Activated T-helper 2 cell treated with anti-CD3 and anti-CD28 coated beads, Interferon-gamma antibody, Interleukin-2, Interleukin-4, amounts not matched to agents 10 μg/mL and 5 μg/mL and 100 μg/mL, durations not matched to agents 14 hours and 24 hours and 36 hours (primary cell): ENCODE measurements at regions of chr6 and their contacts with region 1.

Region 1: GRCh38 chr6:11324453-11325015 is 92.1 kb upstream of the NEDD9 start:
- DNase-seq: peak; percentile 31
- H3K4me3 Mint-ChIP-seq: peak overlapping the region; percentile 40
- H3K27ac Mint-ChIP-seq: peak overlapping the region; percentile 89
- H3K4me1 Mint-ChIP-seq: peaks cover 69% of the 10 kb centered on the region
- H3K27me3 Mint-ChIP-seq: no peaks in the 10 kb centered on the region

Region 2: GRCh38 chr6:11093589-11094410 is 230.7 kb before region 1 on chr6 and contains the start of gene SMIM13:
- intact Hi-C with region 1: loop called (anchors 5 kb)
- DNase-seq: peak; percentile 92
- H3K4me3 Mint-ChIP-seq: peak within 1 kb of the TSS; percentile 96
- H3K27ac Mint-ChIP-seq: peak within 1 kb of the TSS; percentile 98
- H3K4me1 Mint-ChIP-seq: peaks cover 22% of the 10 kb centered on the region
- H3K27me3 Mint-ChIP-seq: peaks cover 2% of the 10 kb centered on the region
- total RNA-seq, gene SMIM13: 12.2 and 12.3 TPM in 2 replicates

Region 3: DNA sequence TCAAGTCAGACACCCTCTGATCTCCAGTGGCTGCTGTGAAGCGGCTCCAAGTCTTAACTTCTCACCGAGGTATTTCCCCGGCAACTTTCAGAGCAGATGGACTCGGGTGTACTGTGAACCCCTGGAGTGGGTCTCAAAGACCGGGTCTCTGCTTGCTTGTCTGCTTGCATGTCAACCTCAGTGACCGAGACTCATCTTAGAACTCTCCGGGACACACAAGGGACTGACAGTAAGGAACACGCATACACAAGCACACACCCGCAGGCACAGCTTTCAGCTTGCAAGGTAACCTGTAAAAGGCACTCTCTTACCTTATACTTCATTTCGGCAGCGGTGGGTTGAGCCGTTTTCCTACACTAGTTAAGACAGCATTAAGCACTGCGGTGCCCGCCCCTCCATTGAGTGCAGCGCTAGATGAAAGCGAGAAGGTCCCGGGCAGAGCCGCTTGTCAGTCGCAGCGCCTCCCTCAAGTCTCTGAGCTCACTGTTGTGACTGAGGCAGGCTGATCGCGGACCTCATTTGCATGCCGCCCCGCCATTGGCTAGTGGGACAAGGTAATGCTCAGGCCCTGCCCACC is 92.3 kb before region 1 on chr6 and contains the start of gene NEDD9:
- intact Hi-C with region 1: loop called (anchors 1 kb)
- DNase-seq: peak; percentile 94
- H3K4me3 Mint-ChIP-seq: peak within 1 kb of the TSS; percentile 93
- H3K27ac Mint-ChIP-seq: peak within 1 kb of the TSS; percentile 99
- H3K4me1 Mint-ChIP-seq: peaks cover 64% of the 10 kb centered on the region
- H3K27me3 Mint-ChIP-seq: no peaks in the 10 kb centered on the region
- total RNA-seq, gene NEDD9: 34.5 and 35.0 TPM in 2 replicates

Region 4: GRCh38 chr6:11251541-11252360 is 72.8 kb before region 1 on chr6:
- intact Hi-C with region 1: no loop called
- DNase-seq: no peak
- H3K4me3 Mint-ChIP-seq: no peak overlapping the region
- H3K27ac Mint-ChIP-seq: no peak overlapping the region
- H3K4me1 Mint-ChIP-seq: peaks cover 7% of the 10 kb centered on the region
- H3K27me3 Mint-ChIP-seq: no peaks in the 10 kb centered on the region

Region 5: GRCh38 chr6:11298651-11299420 is 25.7 kb before region 1 on chr6:
- intact Hi-C with region 1: no loop called
- DNase-seq: no peak
- H3K4me3 Mint-ChIP-seq: no peak overlapping the region
- H3K27ac Mint-ChIP-seq: no peak overlapping the region
- H3K4me1 Mint-ChIP-seq: peaks cover 28% of the 10 kb centered on the region
- H3K27me3 Mint-ChIP-seq: no peaks in the 10 kb centered on the region

Region 6: GRCh38 chr6:11343963-11344747 is 19.6 kb after region 1 on chr6:
- intact Hi-C with region 1: loop called (anchors 1 kb)
- DNase-seq: no peak
- H3K4me3 Mint-ChIP-seq: no peak overlapping the region
- H3K27ac Mint-ChIP-seq: peak overlapping the region; percentile 61
- H3K4me1 Mint-ChIP-seq: peaks cover 68% of the 10 kb centered on the region
- H3K27me3 Mint-ChIP-seq: no peaks in the 10 kb centered on the region

Region 7: GRCh38 chr6:11366183-11366933 is 41.8 kb after region 1 on chr6:
- intact Hi-C with region 1: loop called (anchors 1 kb)
- DNase-seq: peak; percentile 37
- H3K4me3 Mint-ChIP-seq: peak overlapping the region; percentile 34
- H3K27ac Mint-ChIP-seq: peak overlapping the region; percentile 67
- H3K4me1 Mint-ChIP-seq: peaks cover 88% of the 10 kb centered on the region
- H3K27me3 Mint-ChIP-seq: no peaks in the 10 kb centered on the region

Region 8: DNA sequence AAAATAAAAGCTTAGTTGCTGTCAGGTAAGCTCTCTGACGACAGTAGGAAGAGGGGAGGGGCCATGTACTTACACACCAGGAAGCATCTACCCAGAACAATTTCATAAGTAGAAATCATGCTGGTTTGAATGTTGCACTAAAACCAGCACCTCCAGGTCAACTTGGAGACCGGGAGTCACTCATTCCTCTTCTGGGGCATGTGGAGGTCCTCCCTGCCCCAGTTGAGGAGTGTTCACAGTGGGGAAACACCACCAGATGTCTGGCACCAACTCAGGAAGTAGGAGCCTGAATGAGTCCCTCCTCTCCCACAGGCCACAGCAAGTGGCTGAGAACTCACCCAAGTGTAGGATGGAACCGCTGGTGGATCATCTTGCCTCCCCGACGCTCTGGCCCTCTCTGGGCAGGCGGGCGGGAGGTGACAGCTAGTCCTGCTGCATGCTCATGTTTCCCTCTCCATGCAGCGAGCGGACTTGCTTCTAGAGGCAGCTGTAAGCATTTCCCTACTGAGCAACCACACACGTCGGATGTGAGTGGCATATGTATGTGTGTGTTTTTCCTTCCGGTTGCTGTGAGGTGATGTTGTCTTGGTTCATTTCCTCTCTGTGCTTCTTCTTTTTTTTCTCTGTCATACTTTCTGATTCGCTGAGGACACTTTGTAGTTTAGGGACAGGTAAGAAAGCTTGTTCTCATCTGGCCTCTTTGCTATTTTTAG is 57.4 kb after region 1 on chr6:
- intact Hi-C with region 1: loop called (anchors 1 kb)
- DNase-seq: peak; percentile 71
- H3K4me3 Mint-ChIP-seq: peak overlapping the region; percentile 85
- H3K27ac Mint-ChIP-seq: peak overlapping the region; percentile 92
- H3K4me1 Mint-ChIP-seq: peaks cover 59% of the 10 kb centered on the region
- H3K27me3 Mint-ChIP-seq: no peaks in the 10 kb centered on the region

Region 9: GRCh38 chr6:11392778-11393507 is 68.4 kb after region 1 on chr6:
- intact Hi-C with region 1: no loop called
- DNase-seq: no peak
- H3K4me3 Mint-ChIP-seq: no peak overlapping the region
- H3K27ac Mint-ChIP-seq: no peak overlapping the region
- H3K4me1 Mint-ChIP-seq: peaks cover 13% of the 10 kb centered on the region
- H3K27me3 Mint-ChIP-seq: peaks cover 4% of the 10 kb centered on the region

Region 10: DNA sequence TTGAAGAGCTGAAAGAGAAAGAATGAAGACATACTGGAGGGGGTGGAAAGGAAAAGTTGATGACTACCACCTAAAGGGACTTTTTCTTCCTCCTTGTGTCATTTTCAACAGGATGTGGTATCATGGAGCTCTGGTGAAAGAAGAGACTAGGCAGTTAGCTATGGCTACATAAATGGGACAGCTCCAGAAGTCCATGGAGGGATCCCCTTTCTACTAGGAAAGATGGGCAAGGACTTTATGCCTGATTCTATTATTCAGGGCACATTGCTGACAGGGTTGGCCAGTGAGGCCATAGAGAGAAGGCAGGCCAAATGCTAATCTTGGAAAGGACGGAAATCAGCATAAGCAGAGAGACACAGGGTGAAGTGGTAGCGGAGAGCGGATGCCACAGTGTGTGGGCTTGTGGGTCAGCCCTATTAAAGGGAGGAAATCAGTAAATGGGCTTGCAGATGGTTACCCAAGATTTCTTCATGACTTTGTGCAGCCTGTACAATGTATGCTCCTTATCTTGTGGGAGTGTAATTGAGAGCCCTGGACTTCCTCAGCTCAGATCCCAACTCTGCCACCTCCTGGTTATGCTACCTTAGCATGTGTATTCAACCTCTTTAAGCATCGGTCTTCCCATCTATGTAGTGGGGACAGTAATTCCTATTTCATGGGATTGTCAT is 135.6 kb after region 1 on chr6:
- intact Hi-C with region 1: loop called (anchors 1 kb)
- DNase-seq: no peak
- H3K4me3 Mint-ChIP-seq: peak overlapping the region; percentile 67
- H3K27ac Mint-ChIP-seq: peak overlapping the region; percentile 91
- H3K4me1 Mint-ChIP-seq: peaks cover 29% of the 10 kb centered on the region
- H3K27me3 Mint-ChIP-seq: peaks cover 2% of the 10 kb centered on the region

Region 11: GRCh38 chr6:11485271-11485670 is 160.7 kb after region 1 on chr6:
- intact Hi-C with region 1: no loop called
- DNase-seq: no peak
- H3K4me3 Mint-ChIP-seq: no peak overlapping the region
- H3K27ac Mint-ChIP-seq: no peak overlapping the region
- H3K4me1 Mint-ChIP-seq: no peaks in the 10 kb centered on the region
- H3K27me3 Mint-ChIP-seq: peaks cover 8% of the 10 kb centered on the region